Endothelial cell of umbilical vein (primary cell): ENCODE measurements at regions of chr17 and their contacts with region 1.

Region 1: GRCh38 chr17:76523084-76524037 is 14.1 kb downstream of the CYGB start:
- DNase-seq: peak; percentile 60
- H3K4me3 ChIP-seq: no peak overlapping the region
- H3K27ac ChIP-seq: no peak overlapping the region
- H3K4me1 ChIP-seq: peaks cover 10% of the 10 kb centered on the region
- H3K27me3 ChIP-seq: no peaks in the 10 kb centered on the region
- CTCF ChIP-seq: peak; percentile 99 to 100
- POLR2A ChIP-seq: no peak

Region 2: DNA sequence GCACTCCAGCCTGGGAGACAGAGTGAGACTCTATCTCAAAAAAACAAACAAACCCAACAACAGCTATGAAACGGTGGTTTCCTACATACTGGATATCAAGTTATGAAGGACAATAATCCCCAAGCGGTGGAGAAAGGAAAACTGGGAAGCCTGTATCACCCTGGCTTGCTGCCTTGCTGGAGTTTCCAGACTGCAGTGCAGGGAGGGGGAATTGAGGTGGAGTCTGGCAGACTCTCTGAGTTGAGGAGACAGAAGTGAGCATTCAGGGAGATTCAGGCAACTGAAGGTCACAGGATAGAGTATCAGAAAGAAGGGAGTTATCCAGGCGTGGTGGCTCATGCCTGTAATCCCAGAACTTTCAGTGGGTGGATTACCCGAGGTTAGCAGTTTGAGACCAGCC is 227.2 kb before region 1 on chr17:
- CTCF ChIA-PET with region 1: no interaction called
- POLR2A ChIA-PET with region 1: no interaction called
- dilution Hi-C with region 1: no loop called
- intact Hi-C with region 1: no loop called
- DNase-seq: no peak
- H3K4me3 ChIP-seq: no peak overlapping the region
- H3K27ac ChIP-seq: no peak overlapping the region
- H3K4me1 ChIP-seq: peaks cover 4% of the 10 kb centered on the region
- H3K27me3 ChIP-seq: no peaks in the 10 kb centered on the region
- CTCF ChIP-seq: no peak
- POLR2A ChIP-seq: no peak

Region 3: DNA sequence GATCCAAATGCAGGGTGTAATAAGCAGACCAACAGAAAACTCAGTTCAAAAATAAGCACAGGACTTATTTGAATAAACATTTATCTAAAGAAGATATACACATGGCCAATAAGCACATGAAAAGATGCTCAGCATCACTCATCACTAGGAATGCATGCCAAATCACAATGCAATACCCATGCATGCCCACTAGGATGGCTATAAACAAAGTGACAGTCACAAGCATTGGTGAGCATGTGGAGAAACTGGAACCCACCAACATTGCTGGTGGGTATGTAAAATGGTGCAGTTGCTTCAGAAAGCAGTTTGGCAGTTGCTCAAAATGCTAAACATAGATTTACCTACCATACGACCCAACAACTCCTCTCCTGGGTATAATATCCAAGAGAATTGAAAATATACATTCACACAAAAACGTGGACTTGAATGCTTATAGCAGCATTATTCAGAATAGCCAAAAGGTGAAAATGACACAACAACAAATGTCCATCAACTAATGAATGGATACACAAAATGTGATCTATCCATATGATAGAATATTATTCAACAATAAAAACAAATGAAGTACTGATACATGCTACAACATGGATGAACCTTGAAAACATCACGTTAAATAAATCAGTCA is 90.5 kb before region 1 on chr17:
- CTCF ChIA-PET with region 1: no interaction called
- POLR2A ChIA-PET with region 1: no interaction called
- dilution Hi-C with region 1: no loop called
- intact Hi-C with region 1: no loop called
- DNase-seq: no peak
- H3K4me3 ChIP-seq: no peak overlapping the region
- H3K27ac ChIP-seq: no peak overlapping the region
- H3K4me1 ChIP-seq: peaks cover 9% of the 10 kb centered on the region
- H3K27me3 ChIP-seq: no peaks in the 10 kb centered on the region
- CTCF ChIP-seq: peak; percentile 22 to 54
- POLR2A ChIP-seq: no peak

Region 4: DNA sequence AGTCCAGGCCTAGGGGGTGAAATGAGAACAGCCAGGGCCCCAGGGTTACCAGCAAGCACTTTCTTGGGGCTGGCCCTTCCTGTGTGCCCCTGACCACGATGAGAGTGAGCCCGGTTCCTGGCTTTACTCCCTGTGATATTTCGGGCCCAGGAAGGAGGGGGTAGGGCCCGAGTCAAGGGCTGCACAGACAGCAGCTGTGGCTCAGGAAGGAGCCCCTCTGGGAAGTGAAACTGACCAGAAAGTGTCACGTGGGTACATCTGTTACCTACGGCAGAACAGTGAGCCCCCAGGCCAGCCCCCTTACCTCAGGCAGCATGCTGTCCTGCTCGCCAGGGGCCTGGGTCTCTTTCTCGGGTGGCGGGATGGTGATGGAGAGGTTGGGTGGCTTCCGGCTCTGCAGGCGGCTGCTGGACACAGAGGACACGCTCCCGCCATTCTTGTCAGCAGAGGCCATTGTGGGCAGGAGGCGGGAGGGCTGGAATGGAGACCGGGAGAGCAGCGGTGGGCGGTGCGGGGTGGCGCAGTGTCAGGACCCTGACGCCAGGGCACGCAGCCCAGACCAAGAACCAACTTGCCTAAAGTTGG is 42.2 kb before region 1 on chr17:
- CTCF ChIA-PET with region 1: no interaction called
- POLR2A ChIA-PET with region 1: no interaction called
- dilution Hi-C with region 1: no loop called
- intact Hi-C with region 1: loop called (anchors 1 kb)
- DNase-seq: no peak
- H3K4me3 ChIP-seq: no peak overlapping the region
- H3K27ac ChIP-seq: no peak overlapping the region
- H3K4me1 ChIP-seq: peaks cover 15% of the 10 kb centered on the region
- H3K27me3 ChIP-seq: no peaks in the 10 kb centered on the region
- CTCF ChIP-seq: no peak
- POLR2A ChIP-seq: no peak

Region 5: DNA sequence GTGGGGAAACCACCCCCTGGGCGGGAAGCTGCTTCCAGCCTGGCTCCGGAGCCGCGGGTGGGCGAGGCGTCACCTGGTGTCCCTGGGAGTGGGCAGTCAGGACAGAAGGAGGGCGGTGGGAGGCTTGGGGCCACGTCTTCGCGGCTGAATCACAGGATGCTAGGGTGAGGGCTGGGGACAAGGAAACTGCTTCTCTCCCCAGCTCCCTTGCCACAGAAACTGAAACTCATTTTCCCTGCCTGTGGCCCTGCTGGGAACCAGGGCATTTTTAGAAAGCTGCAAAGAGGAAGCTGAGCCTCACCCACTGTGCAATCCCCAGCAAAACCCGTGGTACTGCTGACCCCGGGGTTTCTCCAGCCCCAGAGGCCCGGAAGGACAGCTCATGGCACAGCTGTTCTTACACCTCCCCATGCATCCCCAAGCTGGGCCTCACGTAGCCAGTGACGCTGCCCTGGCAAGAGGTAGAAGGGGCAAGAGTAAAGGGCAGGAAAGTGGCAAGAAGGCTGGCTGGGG is 30.3 kb before region 1 on chr17:
- CTCF ChIA-PET with region 1: no interaction called
- POLR2A ChIA-PET with region 1: no interaction called
- dilution Hi-C with region 1: no loop called
- intact Hi-C with region 1: no loop called
- DNase-seq: peak; percentile 59
- H3K4me3 ChIP-seq: no peak overlapping the region
- H3K27ac ChIP-seq: peak overlapping the region; percentile 42
- H3K4me1 ChIP-seq: peaks cover 27% of the 10 kb centered on the region
- H3K27me3 ChIP-seq: no peaks in the 10 kb centered on the region
- CTCF ChIP-seq: no peak
- POLR2A ChIP-seq: no peak

Region 6: DNA sequence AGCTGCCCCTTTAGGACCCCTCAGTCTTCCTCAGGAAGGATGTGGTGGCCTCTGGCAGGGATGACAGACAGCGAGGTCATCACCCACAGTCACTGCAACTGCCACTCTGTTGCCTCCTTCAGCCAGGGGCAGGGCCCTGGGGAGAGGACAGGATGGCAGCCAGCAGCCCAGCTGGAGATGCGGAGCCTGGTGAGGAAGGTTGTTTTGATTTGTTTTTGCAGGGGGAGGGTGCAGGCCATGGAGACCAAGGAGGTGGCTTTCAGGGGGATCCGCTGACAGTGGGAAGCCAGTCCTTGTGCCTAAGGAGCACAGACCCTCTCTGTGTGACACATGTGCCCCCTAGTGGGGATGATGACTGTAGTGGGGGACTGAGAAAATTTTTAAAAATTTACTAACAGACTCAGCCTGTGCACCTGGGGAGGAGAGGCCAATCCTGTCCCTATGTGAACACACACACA is 23.9 kb after region 1 on chr17:
- CTCF ChIA-PET with region 1: interaction called, 106 read pairs
- POLR2A ChIA-PET with region 1: interaction called, 3 read pairs
- dilution Hi-C with region 1: no loop called
- intact Hi-C with region 1: loop called (anchors 1 kb)
- DNase-seq: peak; percentile 65
- H3K4me3 ChIP-seq: no peak overlapping the region
- H3K27ac ChIP-seq: no peak overlapping the region
- H3K4me1 ChIP-seq: peaks cover 12% of the 10 kb centered on the region
- H3K27me3 ChIP-seq: peaks cover 0 to 3% of the 10 kb centered on the region in 2 experiments
- CTCF ChIP-seq: peak; percentile 58 to 75
- POLR2A ChIP-seq: no peak

Region 7: GRCh38 chr17:76585818-76586593 is 62.6 kb after region 1 on chr17 and contains the start of gene ST6GALNAC2:
- CTCF ChIA-PET with region 1: interaction called, 11 read pairs
- POLR2A ChIA-PET with region 1: no interaction called
- dilution Hi-C with region 1: no loop called
- intact Hi-C with region 1: loop called (anchors 1 kb)
- DNase-seq: peak; percentile 50
- H3K4me3 ChIP-seq: peak within 1 kb of the TSS; percentile 17 to 37 (median 35)
- H3K27ac ChIP-seq: no peak within 1 kb of the TSS
- H3K4me1 ChIP-seq: peaks cover 5% of the 10 kb centered on the region
- H3K27me3 ChIP-seq: peaks cover 16 to 18% of the 10 kb centered on the region in 2 experiments
- CTCF ChIP-seq: peak; percentile 21 to 55
- POLR2A ChIP-seq: no peak
- total RNA-seq, gene ST6GALNAC2: 0.69 and 1.7 TPM in 2 replicates

Region 8: GRCh38 chr17:76714822-76715495 is 191.6 kb after region 1 on chr17:
- CTCF ChIA-PET with region 1: interaction called, 8 read pairs
- POLR2A ChIA-PET with region 1: no interaction called
- dilution Hi-C with region 1: no loop called
- intact Hi-C with region 1: loop called (anchors 10 kb)
- DNase-seq: peak; percentile 57
- H3K4me3 ChIP-seq: no peak overlapping the region
- H3K27ac ChIP-seq: no peak overlapping the region
- H3K4me1 ChIP-seq: peaks cover 16% of the 10 kb centered on the region
- H3K27me3 ChIP-seq: no peaks in the 10 kb centered on the region
- CTCF ChIP-seq: peak; percentile 70 to 72
- POLR2A ChIP-seq: no peak